Activated naive CD4-positive, alpha-beta T cell treated with anti-CD3 and anti-CD28 coated beads for 36 hours (primary cell): ENCODE measurements at regions of chr12 and their contacts with region 1.

Region 1: GRCh38 chr12:96906849-96907670 is at the start of gene NEDD1:
- DNase-seq: peak; percentile 82
- H3K4me3 Mint-ChIP-seq: peak within 1 kb of the TSS; percentile 97
- H3K27ac Mint-ChIP-seq: peak within 1 kb of the TSS; percentile 95
- H3K4me1 Mint-ChIP-seq: peaks cover 41% of the 10 kb centered on the region
- H3K27me3 Mint-ChIP-seq: no peaks in the 10 kb centered on the region
- total RNA-seq, gene NEDD1: 61.8 to 63.8 TPM

Region 2: DNA sequence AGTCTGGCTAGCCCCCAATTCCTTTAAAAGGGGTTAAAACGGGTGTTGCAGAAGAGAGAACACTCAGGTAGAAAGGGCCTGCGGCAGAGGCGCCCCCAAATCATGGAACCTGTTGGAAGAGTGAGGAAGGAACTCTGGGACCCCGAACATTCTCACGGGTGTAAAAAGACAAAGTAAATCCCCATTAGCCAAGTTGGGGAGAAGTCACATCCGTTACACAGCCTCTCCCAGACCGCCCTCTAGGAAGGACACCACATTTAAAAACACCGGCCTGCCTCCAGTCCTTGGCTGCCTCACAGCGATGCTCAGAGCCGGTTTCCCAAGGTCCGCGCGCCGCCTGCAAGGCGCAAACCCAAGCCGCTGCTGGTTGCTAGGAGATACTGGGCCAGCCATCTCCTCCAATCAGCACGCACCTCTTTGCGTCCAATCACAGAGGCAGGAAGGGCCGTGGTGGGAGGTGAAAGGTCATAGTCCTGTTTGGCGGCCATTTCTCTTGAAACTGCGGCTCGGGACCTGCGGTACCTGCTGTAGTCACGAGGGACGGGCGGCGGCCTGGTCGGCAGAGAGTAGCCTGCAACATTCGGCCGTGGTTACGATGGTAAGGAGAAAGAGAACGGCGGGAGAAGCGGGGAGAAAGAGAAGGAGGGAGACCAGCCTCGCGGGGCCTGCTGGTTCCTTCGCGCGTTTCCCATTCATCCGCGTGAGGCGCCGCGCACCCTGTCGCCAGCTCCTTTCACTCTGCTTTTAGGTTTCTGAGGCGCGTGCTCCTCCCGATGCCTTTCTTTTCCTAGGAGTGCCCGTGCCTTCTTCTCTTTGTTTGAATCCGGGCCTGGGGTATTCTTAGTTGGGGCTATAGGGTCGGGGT is 1048.3 kb before region 1 on chr12 and contains the start of gene SNRPF:
- CTCF ChIA-PET with region 1: no interaction called
- intact Hi-C with region 1: loop called (anchors 1 kb)
- DNase-seq: peak; percentile 97
- H3K4me3 Mint-ChIP-seq: no peak within 1 kb of the TSS
- H3K27ac Mint-ChIP-seq: no peak within 1 kb of the TSS
- H3K4me1 Mint-ChIP-seq: peaks cover 25% of the 10 kb centered on the region
- H3K27me3 Mint-ChIP-seq: peaks cover 3% of the 10 kb centered on the region
- total RNA-seq, gene SNRPF: 57.4 to 59.9 TPM

Region 3: GRCh38 chr12:96035278-96036236 is 871.5 kb before region 1 on chr12 and contains the start of gene LTA4H:
- CTCF ChIA-PET with region 1: no interaction called
- intact Hi-C with region 1: loop called (anchors 2 kb)
- DNase-seq: peak; percentile 98
- H3K4me3 Mint-ChIP-seq: no peak within 1 kb of the TSS
- H3K27ac Mint-ChIP-seq: no peak within 1 kb of the TSS
- H3K4me1 Mint-ChIP-seq: peaks cover 19% of the 10 kb centered on the region
- H3K27me3 Mint-ChIP-seq: no peaks in the 10 kb centered on the region
- total RNA-seq, gene LTA4H: 125 TPM

Region 4: DNA sequence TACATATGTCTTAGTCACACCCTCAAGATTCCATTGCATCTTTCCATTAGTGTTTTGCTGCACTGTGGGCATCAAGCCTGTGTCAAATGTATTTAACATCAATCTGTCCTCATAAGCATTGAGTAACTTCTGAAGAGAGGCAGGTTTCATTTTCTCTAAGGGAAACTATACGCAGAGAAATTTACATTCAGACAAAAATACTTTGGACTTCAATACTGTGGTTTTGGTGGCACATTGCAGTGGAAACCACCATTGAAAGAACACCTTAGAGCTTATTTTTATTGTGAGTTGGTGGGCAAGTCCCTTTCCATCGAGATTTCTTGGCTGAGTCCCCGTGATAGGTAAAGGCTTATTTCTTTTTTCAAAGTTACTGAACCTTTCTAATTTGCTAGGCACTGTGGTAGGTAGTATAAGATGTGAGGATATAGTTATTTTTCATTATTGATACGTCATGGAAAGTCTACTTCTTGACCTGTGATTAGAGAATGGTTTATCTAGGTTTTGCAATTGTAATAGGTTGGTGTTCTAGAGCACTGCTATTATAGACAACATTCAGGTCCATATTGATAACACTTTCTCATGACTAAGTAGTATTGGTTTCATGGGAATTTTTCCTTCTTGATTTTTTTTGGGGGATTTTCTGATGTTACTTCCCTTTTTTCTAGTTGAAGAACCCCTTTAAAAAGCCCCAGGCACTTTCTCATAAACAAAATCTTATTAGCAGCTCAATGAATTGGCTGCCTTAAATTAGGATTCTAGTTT is 335.8 kb before region 1 on chr12:
- CTCF ChIA-PET with region 1: no interaction called
- intact Hi-C with region 1: loop called (anchors 1 kb)
- DNase-seq: peak; percentile 58
- H3K4me3 Mint-ChIP-seq: peak overlapping the region; percentile 27
- H3K27ac Mint-ChIP-seq: peak overlapping the region; percentile 15
- H3K4me1 Mint-ChIP-seq: peaks cover 27% of the 10 kb centered on the region
- H3K27me3 Mint-ChIP-seq: peaks cover 7% of the 10 kb centered on the region

Region 5: GRCh38 chr12:96719660-96720363 is 187.2 kb before region 1 on chr12:
- CTCF ChIA-PET with region 1: no interaction called
- intact Hi-C with region 1: loop called (anchors 2 kb)
- DNase-seq: peak; percentile 52
- H3K4me3 Mint-ChIP-seq: peak overlapping the region; percentile 77
- H3K27ac Mint-ChIP-seq: peak overlapping the region; percentile 85
- H3K4me1 Mint-ChIP-seq: peaks cover 11% of the 10 kb centered on the region
- H3K27me3 Mint-ChIP-seq: no peaks in the 10 kb centered on the region

Region 6: DNA sequence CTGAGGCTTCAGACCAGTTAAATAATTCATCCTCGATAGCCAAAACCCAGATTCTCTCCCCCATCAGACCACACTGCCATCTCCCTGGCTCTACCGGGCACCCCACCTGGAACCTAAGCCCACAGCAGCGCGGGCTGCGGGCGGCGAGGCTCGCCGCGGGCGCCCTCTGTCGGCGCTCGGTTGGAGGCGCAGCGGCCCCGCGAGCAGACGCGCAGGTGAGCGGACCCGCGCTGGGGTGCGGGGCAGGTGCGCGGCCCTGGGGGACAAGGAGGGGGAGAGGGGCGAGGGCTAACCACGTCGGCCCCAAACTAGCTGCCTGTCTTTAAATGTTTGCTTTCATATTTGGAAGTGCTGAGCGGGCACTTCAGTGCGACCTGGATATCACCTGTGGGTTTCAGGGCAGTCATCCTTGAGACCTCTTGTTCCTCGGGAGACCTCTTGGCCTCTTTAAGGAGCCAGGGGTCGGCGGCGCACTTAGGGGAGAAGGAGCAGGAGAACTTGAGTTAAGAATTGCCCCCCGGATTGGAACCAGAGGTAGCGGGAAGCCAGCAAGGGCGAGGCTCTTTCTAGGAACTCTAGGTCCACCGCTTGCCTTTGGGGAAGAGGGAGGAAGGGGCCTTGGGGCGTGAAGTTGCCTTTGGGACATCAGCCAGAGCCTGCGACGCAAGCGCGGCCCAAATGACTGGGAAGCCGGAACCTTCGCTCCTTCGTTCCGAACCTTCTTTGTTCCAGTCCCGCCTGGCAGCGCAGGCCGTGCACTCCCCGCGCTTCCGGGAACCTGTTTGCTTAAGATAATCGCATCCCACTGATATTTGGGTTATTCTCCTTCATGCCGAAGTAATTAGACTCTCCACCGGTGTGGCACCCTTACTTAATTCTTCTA is 78.7 kb after region 1 on chr12:
- CTCF ChIA-PET with region 1: no interaction called
- intact Hi-C with region 1: loop called (anchors 1 kb)
- DNase-seq: peak; percentile 30
- H3K4me3 Mint-ChIP-seq: peak overlapping the region; percentile 61
- H3K27ac Mint-ChIP-seq: no peak overlapping the region
- H3K4me1 Mint-ChIP-seq: peaks cover 6% of the 10 kb centered on the region
- H3K27me3 Mint-ChIP-seq: peaks cover 10% of the 10 kb centered on the region

Region 7: DNA sequence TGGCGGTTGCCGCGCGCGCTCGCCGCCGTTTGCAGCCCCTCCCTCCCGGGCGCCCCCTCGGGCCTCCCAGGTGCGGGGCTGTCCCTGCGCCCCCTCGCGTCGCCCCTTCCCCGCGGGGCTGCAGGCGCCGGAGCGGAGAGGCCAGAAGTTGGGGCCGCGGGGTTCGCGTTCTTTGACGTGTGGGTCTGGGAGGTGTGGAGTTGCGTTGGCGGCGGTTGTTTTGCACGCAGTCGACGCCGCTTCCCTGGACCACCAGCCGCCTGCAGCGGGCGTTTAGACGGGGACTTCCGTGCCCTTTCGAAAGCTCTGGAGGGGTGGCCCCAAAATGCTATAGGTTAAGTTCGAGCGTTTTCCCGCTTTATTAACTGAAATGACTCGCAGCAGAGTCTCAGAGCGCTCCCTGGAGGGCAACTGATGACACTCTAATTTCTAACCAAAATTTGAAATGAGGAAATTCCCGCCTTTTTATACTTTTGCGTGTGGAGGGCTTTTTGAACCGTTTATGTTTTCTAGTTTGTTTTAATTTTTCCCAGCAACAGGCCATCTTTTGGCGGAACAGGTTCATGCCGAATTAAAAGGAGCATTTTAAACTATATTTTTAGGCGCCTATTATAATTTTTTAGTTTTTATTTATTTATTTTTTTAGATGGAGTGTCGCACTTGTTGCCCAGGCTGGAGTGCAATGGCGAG is 1609.3 kb after region 1 on chr12:
- CTCF ChIA-PET with region 1: no interaction called
- intact Hi-C with region 1: loop called (anchors 2 kb)
- DNase-seq: peak; percentile 96
- H3K4me3 Mint-ChIP-seq: peak overlapping the region; percentile 92
- H3K27ac Mint-ChIP-seq: peak overlapping the region; percentile 99
- H3K4me1 Mint-ChIP-seq: peaks cover 37% of the 10 kb centered on the region
- H3K27me3 Mint-ChIP-seq: no peaks in the 10 kb centered on the region